ENCODE measurements at regions of chr1 and their contacts with region 1.

Region 1: GRCh38 chr1:16946646-16947045 is 24.9 kb downstream of the CROCC start:
- DNase-seq: no peak
- ATAC-seq: no peak
- H3K4me3 ChIP-seq: no peak overlapping the region
- H3K4me3 Mint-ChIP-seq: no peak overlapping the region
- H3K27ac ChIP-seq: no peak overlapping the region
- H3K27ac Mint-ChIP-seq: no peak overlapping the region
- H3K4me1 ChIP-seq: peaks cover 0 to 3% of the 10 kb centered on the region in 2 donors
- H3K4me1 Mint-ChIP-seq: peaks cover 4% of the 10 kb centered on the region
- H3K27me3 ChIP-seq: no peaks in the 10 kb centered on the region
- H3K27me3 Mint-ChIP-seq: no peaks in the 10 kb centered on the region
- CTCF ChIP-seq: no peak

Region 2: DNA sequence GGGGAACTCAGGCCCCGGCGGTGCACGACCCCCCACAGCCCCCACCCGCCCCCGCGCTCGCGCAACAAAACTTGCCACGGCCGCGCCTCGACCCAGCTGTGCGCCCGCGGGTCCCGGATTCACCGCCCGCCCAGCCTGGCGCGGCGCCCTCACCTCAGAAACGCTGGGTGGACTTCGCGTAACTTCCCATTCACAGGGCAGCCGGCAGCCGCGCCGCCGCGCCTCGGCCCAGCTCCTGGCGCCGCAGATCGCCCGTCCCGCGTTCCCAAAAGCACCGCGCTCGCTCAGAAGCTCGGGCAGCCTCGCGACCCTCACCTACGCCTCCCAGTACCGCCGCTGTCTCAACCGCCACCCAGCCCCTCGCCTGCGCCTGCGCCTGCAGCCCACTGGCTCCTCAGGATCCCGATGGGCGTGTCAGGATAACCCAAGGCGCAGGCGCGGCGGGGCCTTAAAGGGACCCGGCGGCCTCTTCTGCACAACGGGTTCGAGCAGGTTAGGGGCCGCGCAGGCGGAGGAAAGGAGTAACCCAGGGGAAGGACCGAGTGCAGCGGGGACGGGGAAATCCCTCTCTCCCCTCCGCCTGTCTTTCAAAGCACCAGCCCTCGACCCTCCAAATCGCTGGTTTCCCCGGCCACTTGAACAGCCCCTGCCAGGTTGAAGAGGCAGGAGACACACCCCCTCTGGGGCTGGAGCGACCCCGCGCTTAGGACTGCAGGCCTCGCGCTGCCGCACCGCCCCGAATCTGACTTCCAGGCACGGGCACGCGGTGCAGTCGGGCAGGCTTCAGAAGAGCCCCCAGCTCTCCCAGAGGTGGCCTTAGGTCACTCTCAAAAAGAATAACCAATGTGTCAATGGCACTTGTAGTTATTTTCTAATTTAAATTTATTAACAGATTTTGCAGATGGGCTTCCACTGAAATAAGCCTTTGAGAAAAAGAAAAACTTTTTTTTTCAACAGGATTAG is 333.2 kb before region 1 on chr1 and contains the start of gene NBPF1:
- CTCF ChIA-PET with region 1: interaction called, 60 read pairs
- POLR2A ChIA-PET with region 1: interaction called, 9 read pairs
- intact Hi-C with region 1: loop called (anchors 1 kb)
- DNase-seq: peak; percentile 94
- ATAC-seq: peak; percentile 95
- H3K4me3 ChIP-seq: peak within 1 kb of the TSS; percentile 65 to 82 (median 67)
- H3K4me3 Mint-ChIP-seq: no peak within 1 kb of the TSS
- H3K27ac ChIP-seq: peak within 1 kb of the TSS; percentile 16 to 57
- H3K27ac Mint-ChIP-seq: no peak within 1 kb of the TSS
- H3K4me1 ChIP-seq: peaks cover 21% of the 10 kb centered on the region in 2 donors
- H3K4me1 Mint-ChIP-seq: no peaks in the 10 kb centered on the region
- H3K27me3 ChIP-seq: peaks cover 0 to 8% (median 5%) of the 10 kb centered on the region in 4 experiments
- H3K27me3 Mint-ChIP-seq: no peaks in the 10 kb centered on the region
- CTCF ChIP-seq: no peak
- total RNA-seq, gene NBPF1: 64.1 and 66.3 TPM in 2 replicates

Region 3: GRCh38 chr1:16618719-16619118 is 327.9 kb before region 1 on chr1:
- CTCF ChIA-PET with region 1: interaction called, 72 read pairs
- POLR2A ChIA-PET with region 1: interaction called, 11 read pairs
- intact Hi-C with region 1: loop called (anchors 1 kb)
- DNase-seq: peak; percentile 44
- ATAC-seq: no peak
- H3K4me3 ChIP-seq: no peak overlapping the region
- H3K4me3 Mint-ChIP-seq: no peak overlapping the region
- H3K27ac ChIP-seq: no peak overlapping the region
- H3K27ac Mint-ChIP-seq: no peak overlapping the region
- H3K4me1 ChIP-seq: peaks cover 7 to 8% of the 10 kb centered on the region in 2 donors
- H3K4me1 Mint-ChIP-seq: no peaks in the 10 kb centered on the region
- H3K27me3 ChIP-seq: peaks cover 0 to 8% (median 1%) of the 10 kb centered on the region in 4 experiments
- H3K27me3 Mint-ChIP-seq: no peaks in the 10 kb centered on the region
- CTCF ChIP-seq: no peak

Region 4: GRCh38 chr1:16625497-16626408 is 320.9 kb before region 1 on chr1:
- CTCF ChIA-PET with region 1: interaction called, 72 read pairs
- POLR2A ChIA-PET with region 1: interaction called, 11 read pairs
- intact Hi-C with region 1: no loop called
- DNase-seq: peak; percentile 44
- ATAC-seq: no peak
- H3K4me3 ChIP-seq: no peak overlapping the region
- H3K4me3 Mint-ChIP-seq: no peak overlapping the region
- H3K27ac ChIP-seq: no peak overlapping the region
- H3K27ac Mint-ChIP-seq: no peak overlapping the region
- H3K4me1 ChIP-seq: no peaks in the 10 kb centered on the region
- H3K4me1 Mint-ChIP-seq: no peaks in the 10 kb centered on the region
- H3K27me3 ChIP-seq: no peaks in the 10 kb centered on the region
- H3K27me3 Mint-ChIP-seq: no peaks in the 10 kb centered on the region
- CTCF ChIP-seq: no peak

Region 5: GRCh38 chr1:16913833-16914662 is 32.6 kb before region 1 on chr1:
- CTCF ChIA-PET with region 1: no interaction called
- POLR2A ChIA-PET with region 1: no interaction called
- intact Hi-C with region 1: no loop called
- DNase-seq: peak; percentile 96
- ATAC-seq: peak; percentile 97
- H3K4me3 ChIP-seq: peak overlapping the region in 4 of 5 experiments; percentile 65 to 83 (median 72)
- H3K4me3 Mint-ChIP-seq: peak overlapping the region; percentile 91
- H3K27ac ChIP-seq: peak overlapping the region; percentile 62 to 71
- H3K27ac Mint-ChIP-seq: peak overlapping the region; percentile 84
- H3K4me1 ChIP-seq: peaks cover 25 to 27% of the 10 kb centered on the region in 2 donors
- H3K4me1 Mint-ChIP-seq: peaks cover 26% of the 10 kb centered on the region
- H3K27me3 ChIP-seq: no peaks in the 10 kb centered on the region
- H3K27me3 Mint-ChIP-seq: no peaks in the 10 kb centered on the region
- CTCF ChIP-seq: no peak

Region 6: DNA sequence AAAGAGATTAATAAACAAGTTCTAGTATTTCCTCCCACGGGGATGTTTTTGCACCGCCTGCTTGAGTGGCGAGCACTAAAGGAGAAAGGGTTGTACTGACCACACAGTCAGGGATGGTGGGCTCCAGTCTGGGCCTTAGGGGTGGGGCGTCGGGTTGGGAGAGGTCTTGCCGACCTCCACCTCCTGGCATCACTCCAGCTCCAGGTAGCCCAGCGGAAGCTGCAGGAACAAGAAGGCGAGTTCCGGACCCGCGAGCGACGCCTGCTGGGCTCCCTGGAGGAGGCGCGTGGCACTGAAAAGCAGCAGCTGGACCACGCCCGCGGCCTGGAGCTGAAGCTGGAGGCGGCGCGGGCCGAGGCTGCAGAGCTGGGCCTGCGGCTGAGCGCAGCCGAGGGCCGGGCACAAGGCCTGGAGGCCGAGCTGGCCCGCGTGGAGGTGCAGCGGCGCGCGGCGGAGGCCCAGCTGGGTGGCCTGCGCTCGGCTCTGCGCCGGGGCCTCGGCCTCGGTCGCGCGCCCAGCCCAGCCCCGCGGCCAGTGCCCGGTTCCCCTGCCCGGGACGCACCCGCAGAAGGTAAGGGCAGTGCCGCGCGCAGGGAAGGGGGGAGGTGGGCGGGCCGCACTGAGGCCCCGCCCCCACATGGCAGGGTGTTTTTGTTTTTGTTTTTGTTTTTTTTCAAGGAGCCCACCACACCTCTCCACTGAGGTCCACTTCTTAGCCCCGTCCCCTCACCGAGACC is 14.1 kb after region 1 on chr1:
- CTCF ChIA-PET with region 1: interaction called, 29 read pairs
- POLR2A ChIA-PET with region 1: no interaction called
- intact Hi-C with region 1: no loop called
- DNase-seq: peak; percentile 79
- ATAC-seq: peak; percentile 92
- H3K4me3 ChIP-seq: peak overlapping the region in 4 of 5 experiments; percentile 37 to 55 (median 50)
- H3K4me3 Mint-ChIP-seq: peak overlapping the region; percentile 91
- H3K27ac ChIP-seq: peak overlapping the region in 1 of 2 donors; percentile 26
- H3K27ac Mint-ChIP-seq: peak overlapping the region; percentile 76
- H3K4me1 ChIP-seq: peaks cover 4 to 10% of the 10 kb centered on the region in 2 donors
- H3K4me1 Mint-ChIP-seq: peaks cover 9% of the 10 kb centered on the region
- H3K27me3 ChIP-seq: no peaks in the 10 kb centered on the region
- H3K27me3 Mint-ChIP-seq: no peaks in the 10 kb centered on the region
- CTCF ChIP-seq: peak; percentile 75

Region 7: GRCh38 chr1:17045634-17046333 is 99.1 kb after region 1 on chr1:
- CTCF ChIA-PET with region 1: interaction called, 73 read pairs
- POLR2A ChIA-PET with region 1: no interaction called
- intact Hi-C with region 1: loop called (anchors 1 kb)
- DNase-seq: peak; percentile 53
- ATAC-seq: peak; percentile 75
- H3K4me3 ChIP-seq: peak overlapping the region in 4 of 5 experiments; percentile 5 to 36 (median 30)
- H3K4me3 Mint-ChIP-seq: peak overlapping the region; percentile 83
- H3K27ac ChIP-seq: peak overlapping the region; percentile 26 to 56
- H3K27ac Mint-ChIP-seq: peak overlapping the region; percentile 84
- H3K4me1 ChIP-seq: peaks cover 6 to 11% of the 10 kb centered on the region in 2 donors
- H3K4me1 Mint-ChIP-seq: peaks cover 19% of the 10 kb centered on the region
- H3K27me3 ChIP-seq: no peaks in the 10 kb centered on the region
- H3K27me3 Mint-ChIP-seq: no peaks in the 10 kb centered on the region
- CTCF ChIP-seq: peak; percentile 76